ENCODE measurements at regions of chr20 and their contacts with region 1.

Region 1: DNA sequence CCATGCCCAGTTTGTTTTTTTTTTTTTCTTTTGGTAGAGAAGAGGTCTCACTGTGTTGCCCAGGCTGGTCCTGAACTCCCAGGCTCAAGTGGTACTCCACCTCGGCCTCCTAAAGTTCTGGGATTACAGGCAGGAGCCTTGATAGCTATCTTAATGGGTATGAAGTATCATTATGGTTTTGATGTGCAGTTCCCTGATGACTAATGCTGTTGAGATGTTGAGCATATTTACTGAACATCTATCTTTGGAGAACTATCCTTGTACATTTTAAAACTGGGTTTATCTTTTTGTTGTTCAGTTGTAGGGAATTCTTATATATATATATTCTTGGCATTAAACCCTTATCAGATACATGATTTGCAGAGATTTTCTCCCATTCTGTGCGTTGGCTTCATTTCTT is 21.4 kb upstream of the MYL9 start:
- DNase-seq: no peak
- H3K4me3 ChIP-seq: no peak overlapping the region
- H3K27ac ChIP-seq: no peak overlapping the region
- H3K4me1 ChIP-seq: peaks cover 5% of the 10 kb centered on the region
- CTCF ChIP-seq: no peak

Region 2: GRCh38 chr20:35447082-35447789 is 1072.7 kb before region 1 on chr20:
- CTCF ChIA-PET with region 1: no interaction called
- POLR2A ChIA-PET with region 1: no interaction called
- intact Hi-C with region 1: no loop called
- DNase-seq: peak; percentile 80
- H3K4me3 ChIP-seq: peak overlapping the region; percentile 39
- H3K27ac ChIP-seq: no peak overlapping the region
- H3K4me1 ChIP-seq: peaks cover 9% of the 10 kb centered on the region
- CTCF ChIP-seq: peak; percentile 93

Region 3: GRCh38 chr20:36541227-36541763 is 21.4 kb after region 1 on chr20 and contains the start of gene MYL9:
- CTCF ChIA-PET with region 1: no interaction called
- POLR2A ChIA-PET with region 1: no interaction called
- intact Hi-C with region 1: no loop called
- DNase-seq: no peak
- H3K4me3 ChIP-seq: no peak within 1 kb of the TSS
- H3K27ac ChIP-seq: no peak within 1 kb of the TSS
- H3K4me1 ChIP-seq: no peaks in the 10 kb centered on the region
- CTCF ChIP-seq: no peak
- total RNA-seq, gene MYL9: not detected in 2 replicates

Region 4: DNA sequence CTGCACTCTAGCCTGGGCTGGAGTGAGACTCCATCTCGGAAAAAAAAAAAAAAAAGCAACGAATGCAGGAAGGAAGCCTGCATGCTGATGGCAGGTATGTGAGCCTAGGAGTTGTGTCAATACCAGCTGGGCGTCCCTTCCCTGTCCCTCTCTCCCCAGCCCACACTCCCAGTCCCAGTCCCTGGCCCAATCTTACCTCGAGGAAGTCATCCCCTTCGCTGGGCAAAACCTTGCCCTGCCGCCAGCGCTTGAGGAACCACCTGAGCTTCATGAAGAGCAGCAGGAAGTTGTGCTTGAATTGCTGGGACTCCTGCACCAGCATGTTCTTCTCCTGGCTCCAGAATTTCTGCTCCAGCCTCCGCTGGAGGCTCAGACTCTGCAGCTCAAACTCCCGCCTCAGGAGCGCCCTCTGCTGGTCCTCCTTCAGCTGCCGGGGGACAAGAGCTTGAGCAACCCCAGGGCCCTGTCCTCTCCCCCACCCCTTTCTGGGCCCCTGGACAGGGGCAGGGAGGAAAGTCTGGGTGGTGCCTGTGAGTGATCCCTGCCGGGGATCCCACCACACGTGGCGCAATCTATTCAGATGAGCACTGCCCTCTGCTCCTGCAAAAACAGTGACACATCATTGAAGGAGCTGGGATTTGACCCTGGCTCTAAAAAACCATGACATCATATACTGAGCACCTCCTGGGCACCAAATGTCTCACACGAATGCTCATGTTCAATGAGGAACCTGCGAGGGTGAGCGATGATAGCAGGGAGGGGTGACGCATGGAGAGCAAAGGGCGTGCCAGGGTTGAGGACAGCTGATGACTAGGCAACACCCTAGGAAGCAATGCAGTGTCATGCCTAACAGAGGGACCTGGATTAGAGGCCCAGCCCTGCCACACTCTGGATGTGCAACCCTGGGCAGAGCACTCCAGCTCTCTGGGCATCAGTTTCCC is 288.6 kb after region 1 on chr20:
- CTCF ChIA-PET with region 1: no interaction called
- POLR2A ChIA-PET with region 1: no interaction called
- intact Hi-C with region 1: no loop called
- DNase-seq: peak; percentile 65
- H3K4me3 ChIP-seq: no peak overlapping the region
- H3K27ac ChIP-seq: no peak overlapping the region
- H3K4me1 ChIP-seq: no peaks in the 10 kb centered on the region
- CTCF ChIP-seq: peak; percentile 97

Region 5: GRCh38 chr20:36895036-36895435 is 375.1 kb after region 1 on chr20:
- CTCF ChIA-PET with region 1: no interaction called
- POLR2A ChIA-PET with region 1: no interaction called
- intact Hi-C with region 1: loop called (anchors 10 kb)
- DNase-seq: no peak
- H3K4me3 ChIP-seq: no peak overlapping the region
- H3K27ac ChIP-seq: no peak overlapping the region
- H3K4me1 ChIP-seq: no peaks in the 10 kb centered on the region
- CTCF ChIP-seq: no peak

Measured in OCI-LY7 (cell line).